Sciatic nerve (tissue), 2 donors: ENCODE measurements at regions of chr14 and their contacts with region 1.

Region 1: GRCh38 chr14:100654814-100655740 is 67.9 kb upstream of the BEGAIN start:
- DNase-seq: no peak
- ATAC-seq: peak; percentile 43

Region 2: DNA sequence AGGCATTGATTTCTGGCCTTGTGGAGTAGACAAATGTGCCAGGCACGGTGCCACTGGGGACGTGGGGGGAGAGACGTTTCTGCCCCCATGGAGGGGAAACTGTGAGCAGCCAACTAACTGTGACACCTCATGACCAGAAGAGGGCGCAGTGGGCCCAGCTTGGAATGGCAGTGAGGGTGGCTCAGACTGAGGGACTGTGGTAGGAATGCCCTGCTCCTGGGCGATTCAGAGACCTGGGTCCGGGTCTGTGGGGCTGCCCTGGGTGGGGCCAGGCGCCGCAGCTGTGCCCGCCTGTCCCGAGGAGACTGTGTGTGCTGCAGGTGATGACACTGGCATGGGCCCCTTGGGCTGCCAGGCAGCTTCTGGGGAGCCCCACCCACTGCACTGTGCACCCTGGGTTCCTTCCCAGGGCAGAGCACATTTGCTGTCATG is 271.3 kb before region 1 on chr14:
- intact Hi-C with region 1: loop called (anchors 5 kb)
- DNase-seq: peak; percentile 80
- ATAC-seq: peak; percentile 66

Region 3: DNA sequence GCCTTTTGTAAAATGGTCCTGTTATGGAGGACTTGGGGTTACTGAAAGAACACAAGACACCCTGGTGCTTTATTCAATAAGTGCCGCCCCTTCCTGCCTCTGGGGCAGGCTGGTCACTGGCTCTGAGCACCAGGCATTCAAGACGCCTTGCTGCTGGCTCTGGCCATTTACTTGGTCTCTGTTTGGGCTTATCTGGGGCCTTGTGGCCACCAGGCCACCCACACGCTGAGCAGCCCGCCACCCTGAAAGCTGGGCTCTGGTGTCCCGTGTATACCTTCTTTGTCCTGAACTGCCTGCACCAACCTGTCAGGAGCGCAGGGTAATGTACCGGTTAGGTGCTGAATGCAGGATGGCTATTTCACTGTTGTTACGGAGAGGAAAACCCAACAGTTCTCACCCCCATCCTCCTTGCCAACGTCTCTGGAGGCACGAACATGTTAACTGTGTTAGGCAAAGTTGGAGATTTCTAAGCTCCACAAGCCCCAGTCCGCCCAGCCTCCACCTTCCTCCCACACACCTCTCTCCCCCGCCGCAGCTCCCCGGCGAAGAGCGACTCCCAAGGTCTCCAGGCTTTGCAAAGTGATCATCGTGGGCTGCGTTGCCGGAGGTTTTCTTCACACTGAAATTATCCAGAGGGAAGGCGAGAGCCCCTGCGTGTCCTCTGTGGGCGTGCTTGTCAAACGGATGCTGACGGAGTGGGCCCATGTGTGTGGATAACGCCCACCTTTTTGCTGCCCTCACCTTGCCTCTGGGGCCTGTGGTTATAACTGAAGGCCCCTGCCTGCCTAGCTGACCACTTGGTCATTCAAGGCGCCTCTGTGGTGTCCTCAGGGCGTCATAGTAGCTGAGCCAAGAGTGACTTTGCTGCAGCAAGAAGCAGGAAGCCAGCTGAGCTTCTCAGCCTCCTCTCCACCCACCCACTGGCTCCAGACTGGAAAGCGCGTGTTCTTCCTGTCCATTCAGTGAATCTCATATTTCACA is 49.1 kb before region 1 on chr14:
- intact Hi-C with region 1: loop called (anchors 1 kb)
- DNase-seq: peak; percentile 44
- ATAC-seq: no peak